Ascending aorta (tissue), 2 donors: ENCODE measurements at regions of chr9 and their contacts with region 1.

Region 1: GRCh38 chr9:96449845-96450612 is at the start of gene HABP4:
- DNase-seq: peak; percentile 89 to 99
- H3K4me3 ChIP-seq: peak within 1 kb of the TSS; percentile 92 to 98
- H3K27ac ChIP-seq: peak within 1 kb of the TSS; percentile 94 to 98
- H3K4me1 ChIP-seq: peaks cover 0 to 35% of the 10 kb centered on the region in 2 donors
- H3K27me3 ChIP-seq: no peaks in the 10 kb centered on the region
- CTCF ChIP-seq: no peak
- total RNA-seq, gene HABP4: 26.9 TPM

Region 2: GRCh38 chr9:96266282-96267210 is 183.5 kb before region 1 on chr9:
- intact Hi-C with region 1: no loop called
- DNase-seq: no peak
- H3K4me3 ChIP-seq: no peak overlapping the region
- H3K27ac ChIP-seq: no peak overlapping the region
- H3K4me1 ChIP-seq: no peaks in the 10 kb centered on the region
- H3K27me3 ChIP-seq: no peaks in the 10 kb centered on the region
- CTCF ChIP-seq: no peak

Region 3: GRCh38 chr9:96486368-96487028 is 36.5 kb after region 1 on chr9:
- intact Hi-C with region 1: loop called (anchors 1 kb)
- DNase-seq: peak in 1 of 2 donors; percentile 88
- H3K4me3 ChIP-seq: peak overlapping the region in 1 of 2 donors; percentile 12
- H3K27ac ChIP-seq: peak overlapping the region; percentile 92 to 93
- H3K4me1 ChIP-seq: peaks cover 19 to 57% of the 10 kb centered on the region in 2 donors
- H3K27me3 ChIP-seq: no peaks in the 10 kb centered on the region
- CTCF ChIP-seq: no peak

Region 4: GRCh38 chr9:96523374-96523773 is 73.3 kb after region 1 on chr9:
- intact Hi-C with region 1: loop called (anchors 5 kb)
- DNase-seq: peak; percentile 27 to 94
- H3K4me3 ChIP-seq: peak overlapping the region; percentile 28 to 53
- H3K27ac ChIP-seq: peak overlapping the region; percentile 88 to 91
- H3K4me1 ChIP-seq: peaks cover 3 to 37% of the 10 kb centered on the region in 2 donors
- H3K27me3 ChIP-seq: no peaks in the 10 kb centered on the region
- CTCF ChIP-seq: no peak

Region 5: DNA sequence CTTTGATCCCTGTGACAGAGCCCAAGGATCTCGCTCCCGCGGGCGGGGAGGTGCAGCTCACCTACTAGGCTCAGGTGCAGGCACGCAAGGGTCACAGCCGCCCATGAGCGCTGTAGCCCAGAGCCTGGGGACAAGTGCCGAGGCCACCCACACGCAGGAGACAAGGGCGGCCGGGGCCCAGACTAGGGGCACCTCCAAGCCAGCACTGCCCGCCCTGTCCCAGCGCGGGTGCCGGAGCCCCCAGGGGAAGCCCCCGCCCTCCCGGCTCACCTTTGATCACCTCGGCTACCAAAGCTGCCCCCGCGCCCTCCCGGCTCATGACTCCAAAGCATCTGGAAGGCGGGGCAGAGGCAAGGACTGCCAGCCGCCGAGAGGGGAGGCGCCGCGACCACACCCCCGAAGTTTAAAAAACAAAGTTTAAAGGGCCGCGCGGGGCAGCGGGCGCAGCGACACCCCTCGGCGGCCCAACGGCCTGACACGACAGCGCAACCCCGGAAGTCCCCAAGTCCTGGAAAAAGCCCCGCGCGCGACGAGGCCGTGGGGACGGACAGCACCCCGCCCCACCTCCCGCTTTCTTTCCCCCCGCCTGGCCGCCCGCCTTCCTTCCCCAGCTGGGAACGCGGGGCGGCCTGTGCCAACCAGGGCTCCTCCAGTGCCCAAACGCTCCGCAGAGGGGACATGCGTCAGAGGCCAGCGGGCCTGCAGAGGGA is 116.6 kb after region 1 on chr9:
- intact Hi-C with region 1: loop called (anchors 1 kb)
- DNase-seq: peak; percentile 24 to 91
- H3K4me3 ChIP-seq: peak overlapping the region; percentile 70 to 88
- H3K27ac ChIP-seq: peak overlapping the region; percentile 86 to 96
- H3K4me1 ChIP-seq: peaks cover 0 to 11% of the 10 kb centered on the region in 2 donors
- H3K27me3 ChIP-seq: no peaks in the 10 kb centered on the region
- CTCF ChIP-seq: peak; percentile 72 to 80 (median 78)

Region 6: DNA sequence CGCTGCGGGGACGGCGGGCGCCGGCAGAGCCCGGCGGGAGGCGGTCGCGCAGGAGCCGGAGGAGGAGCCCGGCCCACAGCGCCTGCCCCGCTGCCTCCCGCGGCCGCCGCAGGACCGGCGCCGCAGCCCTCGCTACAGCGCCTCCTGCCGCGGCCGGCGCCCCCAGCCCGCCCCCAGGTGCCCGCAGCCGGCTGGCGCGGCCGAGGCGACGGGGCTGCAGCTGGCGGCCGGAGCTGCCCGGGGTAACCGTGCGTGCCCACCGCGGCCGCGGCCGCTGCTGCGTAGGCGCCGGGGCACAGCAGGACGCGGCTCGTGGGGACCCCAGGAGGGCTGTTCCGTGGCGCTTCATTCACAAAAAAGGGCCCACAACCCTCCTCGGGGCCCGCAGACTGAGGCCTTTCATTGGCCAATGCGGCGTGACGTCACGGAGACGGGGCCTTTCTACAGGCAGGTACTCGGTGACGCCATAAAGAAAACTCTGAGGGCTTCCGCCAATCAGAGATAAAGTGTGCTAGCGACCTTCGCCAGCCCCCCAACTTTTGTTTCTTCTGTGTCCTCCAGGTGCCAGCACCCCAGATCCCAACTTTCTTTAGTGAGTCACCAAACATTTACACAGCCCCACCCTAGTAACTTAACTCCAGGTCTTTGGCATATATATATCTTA is 169.6 kb after region 1 on chr9 and contains the start of gene CDC14B:
- intact Hi-C with region 1: loop called (anchors 1 kb)
- DNase-seq: peak; percentile 77 to 95
- H3K4me3 ChIP-seq: peak within 1 kb of the TSS; percentile 98
- H3K27ac ChIP-seq: peak within 1 kb of the TSS; percentile 91 to 93
- H3K4me1 ChIP-seq: no peaks in the 10 kb centered on the region
- H3K27me3 ChIP-seq: no peaks in the 10 kb centered on the region
- CTCF ChIP-seq: peak in 1 of 3 experiments; percentile 37
- total RNA-seq, gene CDC14B: 47.8 TPM